CD14-positive monocyte (primary cell): ENCODE measurements at regions of chr7 and their contacts with region 1.

Region 1: GRCh38 chr7:102279537-102280400 is 6.9 kb upstream of the SH2B2 start:
- DNase-seq: peak in 2 of 3 donors; percentile 50 to 63
- H3K4me3 ChIP-seq: peak overlapping the region in 1 of 3 experiments; percentile 6
- H3K4me3 Mint-ChIP-seq: peak overlapping the region; percentile 34 to 79
- H3K27ac ChIP-seq: no peak overlapping the region
- H3K27ac Mint-ChIP-seq: peak overlapping the region in 5 of 7 donors; percentile 36 to 74 (median 65)
- H3K4me1 ChIP-seq: peaks cover 14 to 22% of the 10 kb centered on the region in 2 donors
- H3K4me1 Mint-ChIP-seq: peaks cover 17% of the 10 kb centered on the region
- H3K27me3 ChIP-seq: no peaks in the 10 kb centered on the region
- H3K27me3 Mint-ChIP-seq: peaks cover 2 to 10% (median 2%) of the 10 kb centered on the region in 3 donors
- CTCF ChIP-seq: peak; percentile 90

Region 2: DNA sequence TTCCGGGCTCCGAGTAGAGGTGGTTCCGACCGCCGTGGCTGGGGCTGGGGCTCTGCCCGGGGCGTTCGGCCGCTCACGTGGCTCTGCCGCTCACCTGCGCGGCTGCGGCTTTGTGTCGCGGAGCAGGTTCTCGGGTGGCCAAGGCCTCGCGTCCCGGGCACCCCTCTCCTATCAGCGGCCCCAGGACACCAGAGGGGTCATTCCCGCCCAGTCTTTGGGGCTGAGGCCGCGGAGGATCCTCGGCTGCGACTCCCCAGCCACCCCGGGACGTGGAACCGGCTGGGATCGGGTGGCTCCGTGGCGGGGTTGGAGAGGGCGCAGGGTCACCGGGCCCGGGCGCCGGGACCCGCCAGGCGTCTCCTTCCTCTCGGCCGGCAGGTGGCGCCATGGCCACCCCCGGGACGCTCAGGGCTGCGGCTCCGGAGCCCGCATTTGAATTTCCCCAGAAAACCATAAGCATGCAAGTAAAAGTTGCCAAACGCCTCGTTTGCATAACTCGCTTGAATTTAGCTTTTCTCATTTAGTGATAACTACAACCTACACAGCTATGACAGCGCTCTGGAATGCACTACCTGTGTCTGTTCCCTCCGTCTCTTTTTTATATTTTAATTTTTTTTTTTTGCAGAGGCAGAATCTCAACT is 915.9 kb before region 1 on chr7:
- intact Hi-C with region 1: loop called in 1 of 2 experiments (anchors 10 kb)
- DNase-seq: peak; percentile 18 to 52 (median 25)
- H3K4me3 ChIP-seq: peak overlapping the region in 2 of 3 experiments; percentile 2 to 59
- H3K4me3 Mint-ChIP-seq: peak overlapping the region in 1 of 2 donors; percentile 30
- H3K27ac ChIP-seq: no peak overlapping the region
- H3K27ac Mint-ChIP-seq: no peak overlapping the region
- H3K4me1 ChIP-seq: peaks cover 5 to 8% of the 10 kb centered on the region in 2 donors
- H3K4me1 Mint-ChIP-seq: peaks cover 5% of the 10 kb centered on the region
- H3K27me3 ChIP-seq: peaks cover 23 to 33% of the 10 kb centered on the region in 2 donors
- H3K27me3 Mint-ChIP-seq: peaks cover 30 to 68% (median 44%) of the 10 kb centered on the region in 3 donors
- CTCF ChIP-seq: peak; percentile 89

Region 3: DNA sequence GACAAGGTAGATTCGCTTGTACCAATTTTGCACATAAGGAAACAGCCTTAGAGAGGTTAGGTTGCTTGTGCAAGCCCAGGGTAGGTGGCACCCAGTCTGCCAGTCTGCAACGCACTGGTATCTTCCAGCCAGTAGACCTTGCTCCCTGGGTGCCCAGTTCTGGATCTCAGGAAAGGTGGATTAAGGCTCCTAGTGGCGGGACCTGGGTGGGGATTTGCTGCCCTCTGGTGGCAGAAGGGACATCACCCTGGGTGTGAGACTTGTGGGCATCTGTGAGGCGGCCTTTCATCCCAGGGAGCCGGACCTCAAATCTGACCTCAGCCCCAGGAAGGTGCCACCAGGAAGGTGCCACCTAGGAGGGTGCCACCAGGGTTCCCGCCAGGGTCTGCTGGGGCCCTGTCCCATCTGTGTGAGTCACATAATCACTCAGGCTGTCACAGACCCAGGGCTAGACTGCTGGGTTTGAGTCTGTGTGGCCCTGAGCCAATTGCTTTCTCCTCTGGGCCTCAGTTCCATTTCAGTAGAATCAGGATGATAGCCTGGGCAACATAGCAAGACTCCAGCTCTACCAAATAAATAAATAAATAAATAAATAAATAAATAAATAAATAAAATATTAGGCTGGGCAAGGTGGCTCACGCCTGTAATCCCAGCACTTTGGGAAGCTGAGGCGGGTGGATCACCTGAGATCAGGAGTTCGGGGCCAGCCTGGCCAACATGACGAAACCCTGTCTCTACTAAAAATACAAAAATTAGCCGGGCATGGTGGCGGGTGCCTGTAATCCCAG is 111.1 kb after region 1 on chr7:
- intact Hi-C with region 1: loop called (anchors 1 to 2 kb)
- DNase-seq: peak; percentile 60 to 71 (median 68)
- H3K4me3 ChIP-seq: no peak overlapping the region
- H3K4me3 Mint-ChIP-seq: no peak overlapping the region
- H3K27ac ChIP-seq: no peak overlapping the region
- H3K27ac Mint-ChIP-seq: no peak overlapping the region
- H3K4me1 ChIP-seq: peaks cover 7% of the 10 kb centered on the region in 2 donors
- H3K4me1 Mint-ChIP-seq: peaks cover 6% of the 10 kb centered on the region
- H3K27me3 ChIP-seq: no peaks in the 10 kb centered on the region
- H3K27me3 Mint-ChIP-seq: peaks cover 0 to 4% (median 0%) of the 10 kb centered on the region in 3 donors
- CTCF ChIP-seq: peak; percentile 92

Region 4: GRCh38 chr7:102450242-102450641 is 170.5 kb after region 1 on chr7:
- intact Hi-C with region 1: loop called in 1 of 2 experiments (anchors 10 kb)
- DNase-seq: peak; percentile 23 to 47 (median 41)
- H3K4me3 ChIP-seq: no peak overlapping the region
- H3K4me3 Mint-ChIP-seq: no peak overlapping the region
- H3K27ac ChIP-seq: no peak overlapping the region
- H3K27ac Mint-ChIP-seq: peak overlapping the region in 1 of 7 donors; percentile 43
- H3K4me1 ChIP-seq: no peaks in the 10 kb centered on the region
- H3K4me1 Mint-ChIP-seq: peaks cover 4% of the 10 kb centered on the region
- H3K27me3 ChIP-seq: no peaks in the 10 kb centered on the region
- H3K27me3 Mint-ChIP-seq: peaks cover 0 to 1% (median 0%) of the 10 kb centered on the region in 3 donors
- CTCF ChIP-seq: peak; percentile 40

Region 5: DNA sequence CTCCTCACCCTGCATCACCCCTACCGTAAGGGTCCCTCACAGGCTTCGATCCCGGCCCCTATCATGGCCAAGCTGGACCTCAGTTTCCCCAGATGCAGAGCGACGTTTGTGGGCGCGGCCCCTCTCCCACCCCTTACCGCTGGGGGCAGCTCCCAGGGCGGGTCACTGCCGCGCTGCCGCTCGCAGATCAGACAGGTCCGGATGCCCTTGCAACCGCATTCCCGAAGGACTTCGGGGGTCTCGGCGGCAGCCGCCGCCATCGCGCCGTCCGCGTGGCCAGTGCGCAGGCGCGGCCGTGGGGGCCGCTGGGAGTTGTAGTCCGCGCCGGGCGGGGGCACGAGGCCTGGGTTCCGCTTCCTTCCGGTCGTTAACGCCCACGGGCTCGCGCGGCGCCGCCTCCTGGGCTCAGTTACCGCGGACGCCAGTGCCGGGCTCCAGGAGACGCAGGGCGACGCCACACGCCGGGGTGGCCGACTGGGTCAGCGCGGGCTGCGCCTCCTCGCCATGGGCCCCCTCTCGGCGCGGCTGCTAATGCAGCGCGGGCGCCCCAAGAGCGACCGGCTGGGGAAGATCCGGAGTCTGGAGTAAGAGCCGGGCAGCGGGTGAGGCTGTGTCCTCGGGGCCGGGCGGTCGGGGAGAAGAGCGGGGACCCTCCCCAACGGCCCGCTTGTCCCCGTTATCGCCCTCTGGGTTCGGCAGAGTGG is 185.0 kb after region 1 on chr7 and contains the starts of genes ALKBH4 and LRWD1:
- intact Hi-C with region 1: loop called (anchors 10 kb)
- DNase-seq: peak; percentile 95
- H3K4me3 ChIP-seq: peak within 1 kb of the TSS; percentile 89 to 100 (median 99)
- H3K4me3 Mint-ChIP-seq: peak within 1 kb of the TSS; percentile 93 to 95
- H3K27ac ChIP-seq: peak within 1 kb of the TSS; percentile 19 to 87
- H3K27ac Mint-ChIP-seq: peak within 1 kb of the TSS in 6 of 7 donors; percentile 72 to 92 (median 84)
- H3K4me1 ChIP-seq: peaks cover 19 to 20% of the 10 kb centered on the region in 2 donors
- H3K4me1 Mint-ChIP-seq: peaks cover 26% of the 10 kb centered on the region
- H3K27me3 ChIP-seq: no peaks in the 10 kb centered on the region
- H3K27me3 Mint-ChIP-seq: peaks cover 0 to 2% (median 0%) of the 10 kb centered on the region in 3 donors
- CTCF ChIP-seq: peak; percentile 45
- polyA plus RNA-seq, gene ALKBH4: 2.9 to 11.8 (median 9.7) TPM
- polyA plus RNA-seq, gene LRWD1: 5.4 to 10.7 (median 6.1) TPM